Heart left ventricle (tissue), 16 donors: ENCODE measurements at regions of chr18 and their contacts with region 1.

Region 1: DNA sequence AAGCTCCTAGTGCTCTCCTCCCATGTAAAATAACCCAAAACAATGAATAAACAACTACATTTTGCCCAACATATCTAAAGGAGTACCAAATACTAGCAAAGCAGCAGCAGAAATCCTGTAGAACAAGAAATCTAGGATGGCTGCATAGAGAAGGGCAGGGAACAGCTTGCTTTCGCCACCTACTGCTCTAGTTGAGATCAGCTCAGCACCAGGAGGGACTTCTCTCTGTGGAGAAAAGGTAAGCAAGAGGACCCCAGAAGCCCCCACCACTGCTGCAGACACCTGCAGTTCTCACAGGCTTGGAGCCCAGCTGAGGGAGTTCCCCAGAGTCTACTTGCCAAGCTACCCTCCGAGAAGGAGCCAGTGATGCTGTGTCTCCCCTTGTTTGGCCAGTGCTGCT is 243.0 kb upstream of the CHST9 start:
- DNase-seq: no peak
- ATAC-seq: no peak
- H3K4me3 ChIP-seq: no peak overlapping the region
- H3K27ac ChIP-seq: no peak overlapping the region
- H3K4me1 ChIP-seq: no peaks in the 10 kb centered on the region
- H3K27me3 ChIP-seq: no peaks in the 10 kb centered on the region
- CTCF ChIP-seq: no peak
- POLR2A ChIP-seq: no peak

Region 2: GRCh38 chr18:27382567-27383216 is 45.4 kb before region 1 on chr18:
- intact Hi-C with region 1: loop called in 1 of 10 experiments (anchors 10 kb)
- DNase-seq: no peak
- ATAC-seq: peak in 2 of 4 donors; percentile 48 to 83
- H3K4me3 ChIP-seq: no peak overlapping the region
- H3K27ac ChIP-seq: no peak overlapping the region
- H3K4me1 ChIP-seq: no peaks in the 10 kb centered on the region
- H3K27me3 ChIP-seq: no peaks in the 10 kb centered on the region
- CTCF ChIP-seq: no peak
- POLR2A ChIP-seq: no peak

Region 3: GRCh38 chr18:27483276-27483675 is 55.2 kb after region 1 on chr18:
- intact Hi-C with region 1: loop called in 1 of 10 experiments (anchors 10 kb)
- DNase-seq: no peak
- ATAC-seq: no peak
- H3K4me3 ChIP-seq: no peak overlapping the region
- H3K27ac ChIP-seq: no peak overlapping the region
- H3K4me1 ChIP-seq: no peaks in the 10 kb centered on the region
- H3K27me3 ChIP-seq: no peaks in the 10 kb centered on the region
- CTCF ChIP-seq: no peak
- POLR2A ChIP-seq: no peak

Region 4: GRCh38 chr18:27501671-27502070 is 73.6 kb after region 1 on chr18:
- intact Hi-C with region 1: loop called in 1 of 10 experiments (anchors 2 kb)
- DNase-seq: no peak
- ATAC-seq: no peak
- H3K4me3 ChIP-seq: no peak overlapping the region
- H3K27ac ChIP-seq: no peak overlapping the region
- H3K4me1 ChIP-seq: no peaks in the 10 kb centered on the region
- H3K27me3 ChIP-seq: no peaks in the 10 kb centered on the region
- CTCF ChIP-seq: no peak
- POLR2A ChIP-seq: no peak

Region 5: DNA sequence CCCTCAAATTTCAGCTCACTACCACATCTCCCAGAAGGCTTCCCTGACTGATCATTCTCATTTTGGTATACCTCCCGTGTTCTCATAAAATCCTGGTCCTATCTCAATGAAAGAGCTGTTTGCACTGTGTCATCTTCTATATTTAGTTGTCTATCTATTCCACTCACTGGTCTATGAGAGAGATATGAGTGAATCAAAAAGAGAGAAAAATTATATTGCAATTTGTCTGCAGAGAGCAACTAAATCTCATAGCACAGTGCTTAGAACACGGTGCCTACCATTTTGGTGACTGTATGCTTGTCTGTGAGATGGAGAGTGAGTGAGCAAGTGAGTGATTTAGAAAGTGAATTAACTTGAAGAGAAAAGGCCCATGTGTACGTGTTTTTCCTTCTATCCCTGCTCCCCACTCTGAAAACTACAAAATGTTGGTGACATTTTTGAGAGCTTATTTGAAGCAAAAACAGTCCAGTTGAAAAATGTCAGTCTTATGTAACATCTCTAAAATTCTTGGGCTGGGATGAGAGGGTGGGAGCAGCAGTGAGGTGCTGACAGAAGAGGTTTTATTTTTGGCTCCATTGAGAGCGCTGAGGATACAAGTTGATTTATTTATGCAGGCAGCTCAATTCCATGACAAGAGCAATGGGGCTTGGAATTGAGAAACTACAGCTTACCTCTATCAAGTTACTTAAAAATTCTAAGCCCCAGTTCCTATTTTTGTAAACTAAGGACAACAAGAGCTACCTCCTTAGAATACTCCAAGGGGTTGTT is 130.5 kb after region 1 on chr18:
- intact Hi-C with region 1: loop called in 1 of 10 experiments (anchors 10 kb)
- DNase-seq: no peak
- ATAC-seq: peak; percentile 59 to 72 (median 62)
- H3K4me3 ChIP-seq: no peak overlapping the region
- H3K27ac ChIP-seq: peak overlapping the region in 4 of 12 donors; percentile 20 to 51 (median 32)
- H3K4me1 ChIP-seq: peaks cover 0 to 19% (median 2%) of the 10 kb centered on the region in 12 donors
- H3K27me3 ChIP-seq: no peaks in the 10 kb centered on the region
- CTCF ChIP-seq: no peak
- POLR2A ChIP-seq: no peak